A673 (cell line): ENCODE measurements at regions of chr19 and their contacts with region 1.

Region 1: DNA sequence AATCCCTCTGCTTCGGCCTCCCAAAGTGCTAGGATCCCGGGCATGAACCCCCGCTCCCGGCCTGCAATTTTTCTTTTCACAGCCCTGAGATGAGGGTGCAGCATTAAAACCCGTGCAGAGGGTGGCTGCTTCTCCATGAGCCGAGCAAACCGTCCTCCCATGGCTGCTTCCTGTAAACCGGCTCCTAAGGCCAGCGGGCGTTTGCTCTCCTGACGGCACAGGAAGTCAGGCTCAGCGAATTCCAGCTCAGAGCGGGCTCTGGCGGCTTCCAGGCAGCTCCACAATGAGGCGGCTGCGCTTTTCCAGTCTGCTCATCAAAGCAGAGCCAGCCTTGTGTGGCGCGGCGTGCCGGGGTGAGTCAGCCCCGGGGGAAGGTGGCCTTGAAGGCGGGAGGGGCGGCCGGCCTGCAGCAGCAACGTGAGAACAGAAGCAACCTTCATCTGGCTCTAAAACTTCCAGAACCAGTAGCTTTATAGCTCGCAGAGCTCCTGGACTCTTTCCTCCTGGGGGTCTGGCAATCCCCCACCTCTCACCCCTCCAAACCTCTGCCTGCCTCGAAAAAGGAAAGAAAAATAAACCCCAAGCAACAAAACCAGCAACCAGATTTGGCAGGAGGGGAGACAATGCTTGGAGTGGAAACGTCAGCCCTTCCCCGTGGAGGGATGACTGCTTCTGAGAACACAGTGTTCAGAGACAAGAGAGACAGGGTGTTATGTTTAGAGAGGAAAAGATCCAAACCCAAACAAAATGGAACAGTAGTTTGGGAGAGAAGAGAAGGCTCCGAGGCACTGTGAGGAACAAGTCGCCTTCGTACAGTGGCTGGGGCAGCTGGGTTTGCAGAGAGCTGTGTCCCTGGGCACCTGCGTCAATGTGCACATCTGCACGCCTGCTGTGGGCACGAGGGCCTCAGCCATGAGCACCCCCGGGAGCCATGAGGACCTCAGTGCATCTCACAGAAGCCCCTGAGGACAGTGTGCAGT is 67.8 kb downstream of the GADD45B start:
- DNase-seq: peak; percentile 98
- H3K4me3 ChIP-seq: no peak overlapping the region
- H3K27ac ChIP-seq: peak overlapping the region; percentile 88
- H3K4me1 ChIP-seq: peaks cover 29% of the 10 kb centered on the region
- H3K27me3 ChIP-seq: no peaks in the 10 kb centered on the region
- CTCF ChIP-seq: peak; percentile 37; the same call in 1 of the 2 replicates

Region 2: DNA sequence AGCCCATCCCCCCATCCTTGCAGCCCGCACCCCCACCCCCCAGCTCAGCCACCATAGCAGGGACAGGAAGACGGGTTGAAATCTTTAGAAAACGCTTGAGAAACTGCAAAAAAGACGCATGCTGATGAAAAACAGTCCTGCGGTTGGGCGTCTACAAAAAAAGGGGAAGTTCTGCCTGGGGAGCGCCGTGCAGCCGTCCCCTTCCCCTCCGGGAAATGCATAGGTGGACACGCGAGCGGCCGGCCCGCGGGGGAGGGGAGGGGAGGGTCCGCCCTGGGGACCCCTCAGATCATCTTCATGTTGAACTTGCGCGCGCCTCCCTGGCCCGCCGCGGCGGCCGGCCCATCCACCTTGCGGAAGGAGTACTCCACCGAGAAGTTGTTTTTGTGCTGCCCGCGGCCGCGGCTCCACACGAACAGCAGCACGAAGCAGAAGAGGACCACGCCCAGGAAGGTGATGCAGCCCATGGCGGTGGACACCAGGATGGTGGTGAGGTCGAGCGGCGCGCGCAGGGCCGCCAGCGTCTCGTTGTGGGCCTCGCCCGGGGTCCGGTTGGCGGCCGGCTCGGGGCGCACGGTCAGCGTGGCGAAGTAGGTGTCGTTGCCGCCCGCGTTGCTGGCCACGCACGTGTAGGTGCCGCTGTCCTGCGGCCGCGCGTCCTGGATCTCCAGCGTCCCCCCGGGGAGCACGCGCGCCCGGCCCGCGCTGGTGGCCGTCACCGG is 253.9 kb before region 1 on chr19:
- CTCF ChIA-PET with region 1: no interaction called
- POLR2A ChIA-PET with region 1: no interaction called
- intact Hi-C with region 1: no loop called
- DNase-seq: no peak
- H3K4me3 ChIP-seq: peak overlapping the region; percentile 30
- H3K27ac ChIP-seq: no peak overlapping the region
- H3K4me1 ChIP-seq: peaks cover 17% of the 10 kb centered on the region
- H3K27me3 ChIP-seq: peaks cover 46% of the 10 kb centered on the region
- CTCF ChIP-seq: no peak

Region 3: DNA sequence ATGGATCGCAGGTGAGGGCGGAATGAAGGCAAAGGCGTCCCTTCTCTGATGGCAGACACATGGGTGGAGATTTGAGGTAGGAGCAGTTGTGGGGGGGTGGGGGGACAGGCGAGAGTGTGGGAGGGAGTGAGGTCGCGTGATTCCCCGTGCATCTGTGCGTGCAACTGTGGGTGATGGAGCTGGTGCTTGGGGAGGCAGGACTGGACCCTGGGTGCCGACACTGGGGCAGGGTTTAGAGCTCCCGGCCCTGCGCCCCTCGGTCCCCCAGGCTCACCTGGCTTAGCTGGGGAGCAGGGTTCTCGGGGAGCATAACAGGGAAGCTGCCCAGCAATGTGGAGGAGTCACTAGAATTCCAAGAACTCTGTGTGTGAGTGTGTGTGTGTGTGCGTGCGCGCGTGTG is 180.3 kb before region 1 on chr19:
- CTCF ChIA-PET with region 1: no interaction called
- POLR2A ChIA-PET with region 1: no interaction called
- intact Hi-C with region 1: no loop called
- DNase-seq: no peak
- H3K4me3 ChIP-seq: no peak overlapping the region
- H3K27ac ChIP-seq: no peak overlapping the region
- H3K4me1 ChIP-seq: no peaks in the 10 kb centered on the region
- H3K27me3 ChIP-seq: peaks cover 21% of the 10 kb centered on the region
- CTCF ChIP-seq: no peak

Region 4: GRCh38 chr19:2434565-2435265 is 109.0 kb before region 1 on chr19:
- CTCF ChIA-PET with region 1: interaction called, 10 read pairs
- POLR2A ChIA-PET with region 1: no interaction called
- intact Hi-C with region 1: no loop called
- DNase-seq: no peak
- H3K4me3 ChIP-seq: no peak overlapping the region
- H3K27ac ChIP-seq: no peak overlapping the region
- H3K4me1 ChIP-seq: peaks cover under 1% of the 10 kb centered on the region
- H3K27me3 ChIP-seq: no peaks in the 10 kb centered on the region
- CTCF ChIP-seq: no peak

Region 5: GRCh38 chr19:2488942-2489731 is 54.6 kb before region 1 on chr19:
- CTCF ChIA-PET with region 1: no interaction called
- POLR2A ChIA-PET with region 1: interaction called, 17 read pairs
- intact Hi-C with region 1: no loop called
- DNase-seq: peak; percentile 62
- H3K4me3 ChIP-seq: peak overlapping the region; percentile 45
- H3K27ac ChIP-seq: no peak overlapping the region
- H3K4me1 ChIP-seq: peaks cover 2% of the 10 kb centered on the region
- H3K27me3 ChIP-seq: peaks cover 5% of the 10 kb centered on the region
- CTCF ChIP-seq: no peak

Region 6: DNA sequence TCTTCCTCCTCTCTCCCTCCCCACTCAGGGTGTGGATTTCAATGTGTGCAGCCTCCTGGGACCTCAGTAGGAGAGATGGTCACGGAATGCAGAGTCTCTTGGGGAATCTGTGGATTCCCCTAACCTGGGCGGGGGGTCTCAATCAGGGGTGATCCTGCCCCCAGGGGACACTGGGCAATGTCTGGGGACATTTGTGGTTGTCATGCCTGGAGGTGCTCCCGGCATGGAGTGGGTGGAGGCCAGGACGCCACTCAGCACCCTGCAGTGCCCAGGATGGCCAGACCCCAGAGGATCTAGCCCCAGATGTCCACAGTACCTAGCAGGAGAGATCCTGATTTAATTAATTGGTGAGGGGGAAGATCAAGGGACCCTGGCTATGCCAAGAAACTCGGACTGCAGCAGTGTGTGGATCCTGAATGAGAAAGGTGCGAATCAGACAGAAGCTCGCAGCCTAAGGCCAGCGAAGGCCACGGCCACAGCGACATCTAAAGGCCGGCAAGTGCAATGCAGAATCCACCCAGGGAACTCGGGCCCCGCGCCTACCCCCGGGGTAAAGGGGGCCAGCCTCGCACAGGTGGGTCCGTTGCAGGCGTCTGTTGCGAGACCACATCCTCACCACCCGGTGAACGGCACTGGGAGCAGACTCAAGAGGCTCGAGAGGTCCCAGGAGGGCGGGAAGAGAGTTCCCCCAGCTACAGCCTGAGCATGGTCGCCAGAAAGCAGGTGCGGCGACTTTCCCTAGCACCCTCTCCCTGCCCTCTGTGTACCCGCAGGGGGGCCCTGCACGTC is 69.9 kb after region 1 on chr19:
- CTCF ChIA-PET with region 1: no interaction called
- POLR2A ChIA-PET with region 1: no interaction called
- intact Hi-C with region 1: no loop called
- DNase-seq: peak; percentile 55
- H3K4me3 ChIP-seq: no peak overlapping the region
- H3K27ac ChIP-seq: no peak overlapping the region
- H3K4me1 ChIP-seq: no peaks in the 10 kb centered on the region
- H3K27me3 ChIP-seq: no peaks in the 10 kb centered on the region
- CTCF ChIP-seq: peak; percentile 89